Activated B cell treated with CpG ODN at 0.5 μM for 24 hours (primary cell): ENCODE measurements at regions of chr18 and their contacts with region 1.

Region 1: GRCh38 chr18:32707147-32707546 is 65.7 kb downstream of the KLHL14 start:
- DNase-seq: no peak
- ATAC-seq: no peak
- H3K4me3 Mint-ChIP-seq: no peak overlapping the region
- H3K27ac Mint-ChIP-seq: no peak overlapping the region
- H3K4me1 Mint-ChIP-seq: peaks cover 11% of the 10 kb centered on the region
- H3K27me3 Mint-ChIP-seq: no peaks in the 10 kb centered on the region
- CTCF ChIP-seq: no peak

Region 2: GRCh38 chr18:32494111-32494510 is 213.0 kb before region 1 on chr18:
- CTCF ChIA-PET with region 1: no interaction called
- POLR2A ChIA-PET with region 1: no interaction called
- intact Hi-C with region 1: no loop called
- DNase-seq: no peak
- ATAC-seq: no peak
- H3K4me3 Mint-ChIP-seq: no peak overlapping the region
- H3K27ac Mint-ChIP-seq: no peak overlapping the region
- H3K4me1 Mint-ChIP-seq: no peaks in the 10 kb centered on the region
- H3K27me3 Mint-ChIP-seq: peaks cover 1% of the 10 kb centered on the region
- CTCF ChIP-seq: no peak

Region 3: GRCh38 chr18:32753656-32754260 is 46.6 kb after region 1 on chr18:
- CTCF ChIA-PET with region 1: no interaction called
- POLR2A ChIA-PET with region 1: interaction called, 11 read pairs
- intact Hi-C with region 1: no loop called
- DNase-seq: no peak
- ATAC-seq: no peak
- H3K4me3 Mint-ChIP-seq: no peak overlapping the region
- H3K27ac Mint-ChIP-seq: peak overlapping the region; percentile 18
- H3K4me1 Mint-ChIP-seq: peaks cover 71% of the 10 kb centered on the region
- H3K27me3 Mint-ChIP-seq: no peaks in the 10 kb centered on the region
- CTCF ChIP-seq: no peak